Endothelial cell of umbilical vein (primary cell): ENCODE measurements at regions of chr5 and their contacts with region 1.

Region 1: DNA sequence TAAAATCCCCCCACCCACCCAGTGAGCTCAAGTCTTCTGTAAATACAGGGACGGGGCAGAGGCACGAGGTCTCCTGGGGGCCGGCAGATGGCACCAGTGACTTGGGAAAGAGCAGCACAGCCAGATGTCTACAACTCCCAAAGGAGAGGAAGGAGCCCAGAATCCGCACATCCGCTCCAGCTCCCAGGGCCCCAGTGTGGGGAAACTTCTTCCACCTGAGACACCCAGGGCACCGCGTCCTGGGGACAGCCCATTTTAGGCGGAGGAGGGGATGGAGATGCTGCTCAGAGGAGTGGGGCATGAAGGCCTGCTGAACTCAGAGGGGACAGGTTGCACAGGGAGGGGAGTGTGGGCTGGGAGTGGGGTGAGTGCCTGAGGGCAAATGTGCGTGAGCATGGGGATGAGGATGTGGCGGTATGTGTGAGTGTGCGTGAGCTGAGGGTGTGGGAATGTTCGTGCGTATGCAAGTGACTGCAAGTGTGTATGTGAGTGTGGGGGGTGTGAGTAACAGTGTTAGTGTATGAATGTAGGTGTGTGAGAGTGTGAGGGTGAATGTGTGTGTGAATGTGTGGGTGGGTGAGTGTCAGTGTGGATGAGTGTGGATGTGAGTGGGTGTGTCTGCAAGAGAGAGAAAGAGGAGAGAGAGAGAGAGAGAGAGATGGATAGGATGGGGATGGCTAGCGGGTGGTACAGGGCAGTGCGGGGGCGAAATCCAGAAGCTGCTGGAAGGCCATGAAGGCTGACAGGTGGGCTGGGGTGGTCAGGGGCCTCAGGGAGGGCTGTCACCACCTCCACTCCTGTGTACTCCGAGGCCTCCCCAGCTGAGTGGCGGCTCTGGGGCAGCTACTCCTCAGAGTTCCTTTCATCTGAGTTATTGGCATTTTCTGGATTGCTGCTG is 63.5 kb downstream of the DUSP1 start:
- DNase-seq: peak; percentile 62
- H3K4me3 ChIP-seq: no peak overlapping the region
- H3K27ac ChIP-seq: no peak overlapping the region
- H3K4me1 ChIP-seq: no peaks in the 10 kb centered on the region
- H3K27me3 ChIP-seq: no peaks in the 10 kb centered on the region
- CTCF ChIP-seq: peak; percentile 61 to 64
- POLR2A ChIP-seq: no peak

Region 2: DNA sequence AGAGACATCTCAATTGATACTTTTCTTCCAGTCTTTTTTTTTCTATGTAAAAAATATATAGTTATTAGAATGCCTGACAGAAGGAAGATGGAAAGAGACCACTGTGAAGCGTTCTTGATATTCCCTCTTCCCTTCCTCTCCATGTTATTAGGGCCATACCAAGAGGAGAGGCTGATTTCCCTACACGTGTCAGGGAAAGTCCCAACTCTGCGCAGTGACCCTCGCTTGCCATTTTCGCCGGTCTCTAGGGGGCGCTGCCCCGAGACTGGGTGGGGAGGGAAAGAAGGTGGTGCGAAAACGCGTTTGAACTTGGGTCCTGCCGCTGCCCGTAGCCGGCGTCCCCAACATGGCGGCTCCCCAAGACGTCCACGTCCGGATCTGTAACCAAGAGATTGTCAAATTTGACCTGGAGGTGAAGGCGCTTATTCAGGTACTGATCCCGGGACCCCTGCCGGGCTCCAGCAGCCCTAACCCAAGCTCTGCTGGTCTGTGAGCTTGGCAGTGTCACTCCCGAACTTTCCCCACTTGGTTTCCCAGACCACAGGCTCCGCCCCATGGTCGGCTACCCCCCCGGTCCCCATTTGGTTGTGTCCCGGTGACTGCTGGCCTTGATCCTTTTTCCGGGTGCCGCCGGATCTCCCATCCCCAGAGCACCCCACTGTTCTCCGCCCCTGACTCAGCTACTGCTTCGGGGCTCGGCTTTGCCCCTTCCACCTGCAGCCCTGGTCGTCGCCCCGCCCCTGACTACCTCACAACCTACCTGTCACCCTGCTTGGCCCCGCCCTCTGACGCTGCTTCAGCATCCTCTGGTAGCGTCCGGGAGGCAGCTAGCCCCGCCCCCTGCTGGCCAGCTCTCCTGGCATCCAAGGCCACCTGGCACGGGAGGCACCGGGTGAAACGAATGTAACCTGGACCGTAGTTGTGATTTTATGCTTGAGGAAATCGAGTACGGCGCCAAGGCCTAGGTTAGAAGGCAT is 437.0 kb after region 1 on chr5 and contains the start of gene BNIP1:
- CTCF ChIA-PET with region 1: interaction called, 4 read pairs
- POLR2A ChIA-PET with region 1: no interaction called
- dilution Hi-C with region 1: no loop called
- intact Hi-C with region 1: loop called (anchors 1 kb)
- DNase-seq: peak; percentile 95
- H3K4me3 ChIP-seq: peak within 1 kb of the TSS; percentile 77 to 97 (median 89)
- H3K27ac ChIP-seq: peak within 1 kb of the TSS; percentile 89
- H3K4me1 ChIP-seq: peaks cover 4% of the 10 kb centered on the region
- H3K27me3 ChIP-seq: no peaks in the 10 kb centered on the region
- CTCF ChIP-seq: peak; percentile 98
- POLR2A ChIP-seq: peak; percentile 73
- total RNA-seq, gene BNIP1: 15.7 and 19.7 TPM in 2 replicates

Region 3: DNA sequence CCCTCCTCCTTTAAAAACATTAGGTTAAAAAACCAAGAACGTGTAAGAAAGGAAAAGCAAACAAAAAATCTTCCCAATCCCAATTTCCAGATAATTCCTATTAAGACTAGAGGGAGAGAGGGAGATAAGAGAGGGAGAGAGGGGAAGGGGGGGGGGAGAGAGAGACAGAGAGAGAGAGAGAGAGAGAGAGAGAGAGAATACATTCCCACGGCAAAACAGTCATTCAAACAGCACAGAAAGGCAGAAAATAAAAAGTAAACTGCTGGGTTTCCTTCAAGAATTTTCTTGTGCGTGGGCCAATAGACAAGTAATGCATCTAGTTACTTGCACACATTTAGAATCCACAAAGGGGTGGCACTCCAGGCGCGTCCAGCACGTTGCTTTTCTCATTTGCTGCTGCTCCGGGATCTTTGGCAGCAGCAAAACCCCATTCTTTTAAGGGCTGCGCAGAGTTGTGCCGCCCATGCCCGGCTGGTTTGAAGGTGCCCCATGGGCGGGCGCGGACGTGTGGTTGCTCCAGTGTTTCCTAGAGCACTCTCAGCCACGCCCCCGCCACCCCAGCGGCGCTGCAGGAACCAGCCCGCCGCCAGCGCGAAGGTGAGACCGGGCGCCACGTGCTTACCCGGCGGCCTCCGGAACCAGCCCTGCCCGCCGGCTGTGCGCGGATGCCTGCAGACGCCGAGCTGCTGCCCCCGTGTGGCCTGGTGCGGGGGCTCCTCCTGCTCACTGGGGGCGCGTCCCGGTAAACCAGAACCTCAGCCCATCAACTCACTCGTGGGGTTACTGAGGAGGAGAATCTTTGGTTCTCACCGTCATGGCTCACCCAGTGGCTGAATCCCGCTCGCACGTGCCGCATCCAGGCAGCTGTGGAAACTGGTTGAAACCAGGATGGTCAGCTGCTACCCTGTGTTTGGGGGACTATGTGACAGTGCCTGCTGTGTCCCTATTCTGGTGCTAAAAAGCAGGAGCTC is 576.1 kb after region 1 on chr5:
- CTCF ChIA-PET with region 1: interaction called, 10 read pairs
- POLR2A ChIA-PET with region 1: no interaction called
- dilution Hi-C with region 1: no loop called
- intact Hi-C with region 1: loop called (anchors 1 kb)
- DNase-seq: peak; percentile 62
- H3K4me3 ChIP-seq: no peak overlapping the region
- H3K27ac ChIP-seq: no peak overlapping the region
- H3K4me1 ChIP-seq: peaks cover 2% of the 10 kb centered on the region
- H3K27me3 ChIP-seq: peaks cover 16 to 18% of the 10 kb centered on the region in 2 experiments
- CTCF ChIP-seq: peak; percentile 84 to 89
- POLR2A ChIP-seq: no peak

Region 4: DNA sequence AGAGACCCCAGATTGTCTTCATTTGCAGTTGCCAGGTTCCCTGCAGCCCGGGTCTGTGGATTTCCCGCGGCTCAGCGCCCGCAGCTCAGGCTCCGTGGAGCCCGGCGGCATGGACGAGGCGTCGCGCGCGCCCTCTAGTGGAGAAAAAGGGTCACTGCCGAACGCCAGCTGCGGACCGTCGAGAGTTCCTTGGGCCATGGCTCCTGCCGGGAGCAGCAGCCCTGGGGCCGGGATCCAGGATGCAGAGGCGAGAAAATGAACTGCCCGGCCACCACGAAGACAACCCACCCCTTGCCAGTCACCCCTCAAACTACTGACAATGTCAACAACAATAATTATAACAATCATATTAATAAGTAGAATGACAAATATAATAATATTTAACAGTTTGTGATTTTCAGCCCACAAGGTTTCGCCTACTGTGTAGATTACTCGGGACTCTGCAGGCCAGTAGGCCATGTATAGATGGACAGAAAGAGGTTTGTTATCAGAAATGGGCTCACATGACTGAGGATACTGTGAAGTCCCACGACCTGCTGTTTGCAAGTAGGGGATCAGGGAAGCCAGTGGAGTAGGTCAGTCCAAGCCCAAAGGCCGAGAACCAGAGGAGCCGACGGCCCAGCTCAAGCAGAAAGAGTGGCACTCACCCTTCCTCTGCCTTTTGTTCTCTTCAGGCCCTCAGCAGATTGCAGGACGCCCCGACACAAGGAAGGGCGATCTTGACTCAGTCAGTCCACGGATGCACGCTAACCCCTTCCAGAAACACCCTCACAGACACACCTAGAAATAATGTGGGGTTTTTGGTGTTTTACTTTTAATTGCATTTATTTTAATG is 865.8 kb after region 1 on chr5:
- CTCF ChIA-PET with region 1: interaction called, 29 read pairs
- POLR2A ChIA-PET with region 1: no interaction called
- dilution Hi-C with region 1: no loop called
- intact Hi-C with region 1: no loop called
- DNase-seq: peak; percentile 65
- H3K4me3 ChIP-seq: no peak overlapping the region
- H3K27ac ChIP-seq: no peak overlapping the region
- H3K4me1 ChIP-seq: peaks cover 2% of the 10 kb centered on the region
- H3K27me3 ChIP-seq: peaks cover 0 to 4% of the 10 kb centered on the region in 2 experiments
- CTCF ChIP-seq: peak; percentile 94 to 98
- POLR2A ChIP-seq: no peak